ENCODE measurements at regions of chr13 and their contacts with region 1.

Region 1: GRCh38 chr13:99374994-99375737 is 68.0 kb upstream of the GPR183 start:
- DNase-seq: peak; percentile 78
- ATAC-seq: peak; percentile 80
- H3K4me3 Mint-ChIP-seq: peak overlapping the region; percentile 72
- H3K27ac Mint-ChIP-seq: peak overlapping the region; percentile 98
- H3K4me1 Mint-ChIP-seq: peaks cover 92% of the 10 kb centered on the region
- H3K27me3 Mint-ChIP-seq: no peaks in the 10 kb centered on the region
- CTCF ChIP-seq: no peak

Region 2: DNA sequence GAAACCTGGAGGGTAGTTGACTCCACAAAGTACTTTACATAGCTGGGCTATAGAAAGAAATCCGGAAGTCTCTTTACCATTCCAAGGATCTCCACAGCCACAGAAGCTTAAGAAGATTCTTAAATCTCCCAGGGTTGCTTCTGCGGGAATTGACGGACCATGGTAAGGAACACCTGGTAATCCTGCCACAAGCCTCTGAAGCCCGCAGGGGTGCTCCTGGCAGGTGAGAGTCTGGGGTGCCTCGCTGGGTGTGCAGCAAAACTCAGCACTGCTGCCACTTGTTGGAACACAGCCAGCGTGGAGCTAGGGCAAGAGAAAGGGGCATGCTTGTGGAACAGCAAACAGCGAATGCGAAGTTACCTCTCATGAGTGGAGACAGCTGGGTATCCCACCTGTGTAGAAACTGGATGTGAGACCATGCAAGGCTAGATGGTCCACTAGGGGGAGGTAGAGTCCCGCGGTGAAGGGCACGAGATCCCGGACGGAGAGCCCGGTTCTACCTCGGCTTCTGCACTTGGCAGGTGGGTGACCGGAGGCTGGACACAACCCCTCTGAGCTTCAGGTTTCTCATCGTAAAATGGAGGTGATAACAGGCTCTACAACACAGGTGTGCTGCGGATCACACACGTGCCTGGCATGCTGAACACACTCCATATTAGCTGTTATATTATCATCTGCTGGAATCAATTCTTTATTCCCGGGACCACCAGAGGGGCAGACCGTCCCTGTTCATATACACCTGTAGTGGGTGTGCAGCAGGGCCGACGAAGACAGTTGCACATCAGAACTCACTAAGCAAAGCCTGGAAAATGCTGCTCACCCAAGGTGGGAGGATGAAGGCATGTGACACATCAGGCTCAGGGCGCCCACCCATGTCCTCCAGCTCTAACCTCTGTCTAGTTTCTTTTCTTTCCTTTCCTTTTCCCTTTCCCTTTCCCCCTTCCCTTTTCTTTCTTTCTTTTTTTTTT is 198.6 kb before region 1 on chr13:
- CTCF ChIA-PET with region 1: interaction called, 3 read pairs
- POLR2A ChIA-PET with region 1: interaction called, 14 read pairs
- intact Hi-C with region 1: no loop called
- DNase-seq: peak; percentile 64
- ATAC-seq: peak; percentile 90
- H3K4me3 Mint-ChIP-seq: peak overlapping the region; percentile 58
- H3K27ac Mint-ChIP-seq: peak overlapping the region; percentile 24
- H3K4me1 Mint-ChIP-seq: peaks cover 43% of the 10 kb centered on the region
- H3K27me3 Mint-ChIP-seq: peaks cover 2% of the 10 kb centered on the region
- CTCF ChIP-seq: no peak

Region 3: GRCh38 chr13:99281811-99282263 is 93.3 kb before region 1 on chr13:
- CTCF ChIA-PET with region 1: interaction called, 9 read pairs
- POLR2A ChIA-PET with region 1: interaction called, 45 read pairs
- intact Hi-C with region 1: loop called (anchors 1 kb)
- DNase-seq: peak; percentile 46
- ATAC-seq: peak; percentile 81
- H3K4me3 Mint-ChIP-seq: peak overlapping the region; percentile 75
- H3K27ac Mint-ChIP-seq: peak overlapping the region; percentile 95
- H3K4me1 Mint-ChIP-seq: peaks cover 95% of the 10 kb centered on the region
- H3K27me3 Mint-ChIP-seq: no peaks in the 10 kb centered on the region
- CTCF ChIP-seq: no peak

Region 4: GRCh38 chr13:99301913-99302636 is 73.1 kb before region 1 on chr13:
- CTCF ChIA-PET with region 1: interaction called, 4 read pairs
- POLR2A ChIA-PET with region 1: interaction called, 75 read pairs
- intact Hi-C with region 1: loop called (anchors 1 kb)
- DNase-seq: no peak
- ATAC-seq: peak; percentile 56
- H3K4me3 Mint-ChIP-seq: peak overlapping the region; percentile 95
- H3K27ac Mint-ChIP-seq: peak overlapping the region; percentile 93
- H3K4me1 Mint-ChIP-seq: peaks cover 83% of the 10 kb centered on the region
- H3K27me3 Mint-ChIP-seq: no peaks in the 10 kb centered on the region
- CTCF ChIP-seq: no peak

Region 5: DNA sequence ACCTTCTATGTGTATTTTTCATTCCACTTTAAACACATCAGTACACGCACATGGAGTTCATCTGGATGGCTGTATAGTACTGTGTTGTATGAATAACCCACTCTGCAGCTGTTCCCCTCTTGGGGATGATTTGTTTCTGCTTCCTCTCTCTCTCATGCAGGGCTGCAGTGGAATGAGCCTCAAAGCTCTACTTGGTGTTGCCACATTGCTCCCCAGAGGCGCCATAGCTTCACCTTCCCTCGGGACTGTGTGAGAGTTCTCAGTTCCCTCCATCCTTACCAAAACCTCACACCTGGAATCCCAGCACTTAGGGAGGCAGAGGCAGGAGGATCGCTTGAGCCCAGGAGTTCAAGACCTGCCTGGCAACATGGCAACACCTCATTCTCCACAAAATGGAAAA is 39.6 kb before region 1 on chr13:
- CTCF ChIA-PET with region 1: interaction called, 4 read pairs
- POLR2A ChIA-PET with region 1: interaction called, 21 read pairs
- intact Hi-C with region 1: loop called (anchors 2 kb)
- DNase-seq: peak; percentile 40
- ATAC-seq: peak; percentile 94
- H3K4me3 Mint-ChIP-seq: peak overlapping the region; percentile 29
- H3K27ac Mint-ChIP-seq: peak overlapping the region; percentile 77
- H3K4me1 Mint-ChIP-seq: peaks cover 56% of the 10 kb centered on the region
- H3K27me3 Mint-ChIP-seq: no peaks in the 10 kb centered on the region
- CTCF ChIP-seq: no peak

Region 6: DNA sequence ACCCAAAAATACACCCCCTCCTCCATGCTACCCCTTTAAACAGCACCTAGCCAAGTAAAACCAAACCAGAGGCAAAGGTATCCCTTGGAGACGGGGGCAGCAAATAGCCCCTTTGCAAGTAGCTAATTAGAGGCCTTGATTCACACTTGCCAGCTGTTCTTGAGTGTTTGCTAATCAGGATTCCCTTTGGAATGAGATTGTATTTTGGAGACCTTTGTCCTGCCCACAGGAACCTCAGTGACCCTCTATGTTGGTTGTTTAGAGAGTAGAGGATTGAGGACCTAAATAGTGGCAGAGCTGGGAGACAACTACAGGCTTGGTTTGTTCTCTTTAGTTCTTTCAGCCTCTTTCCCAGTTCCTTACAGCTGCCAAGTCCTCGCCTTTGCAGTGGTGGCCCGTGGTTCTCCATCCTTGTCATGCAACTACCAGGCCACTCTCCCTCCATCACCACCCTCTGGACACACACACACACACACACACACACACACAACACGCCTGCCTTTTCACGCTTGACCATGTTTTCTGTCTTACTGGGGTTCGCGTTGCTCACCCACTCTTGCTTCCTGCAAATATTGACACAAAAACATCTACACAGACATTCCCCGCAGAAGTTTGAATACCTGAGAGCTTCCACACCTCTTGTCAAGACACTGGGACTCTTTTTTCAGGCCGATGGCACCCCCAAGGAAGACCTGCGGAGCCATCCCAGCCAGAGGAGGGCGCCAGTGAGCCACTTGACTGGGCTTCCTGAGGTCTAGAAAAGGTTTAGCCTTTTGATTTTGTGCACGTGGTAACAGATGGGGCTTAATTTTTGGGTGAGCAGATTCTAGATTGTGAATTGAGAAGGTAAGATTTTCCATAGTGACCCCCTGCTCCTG is 12.0 kb after region 1 on chr13:
- CTCF ChIA-PET with region 1: interaction called, 25 read pairs
- POLR2A ChIA-PET with region 1: interaction called, 8 read pairs
- intact Hi-C with region 1: loop called (anchors 1 kb)
- DNase-seq: peak; percentile 81
- ATAC-seq: peak; percentile 78
- H3K4me3 Mint-ChIP-seq: peak overlapping the region; percentile 12
- H3K27ac Mint-ChIP-seq: peak overlapping the region; percentile 84
- H3K4me1 Mint-ChIP-seq: peaks cover 43% of the 10 kb centered on the region
- H3K27me3 Mint-ChIP-seq: no peaks in the 10 kb centered on the region
- CTCF ChIP-seq: peak; percentile 94

Region 7: DNA sequence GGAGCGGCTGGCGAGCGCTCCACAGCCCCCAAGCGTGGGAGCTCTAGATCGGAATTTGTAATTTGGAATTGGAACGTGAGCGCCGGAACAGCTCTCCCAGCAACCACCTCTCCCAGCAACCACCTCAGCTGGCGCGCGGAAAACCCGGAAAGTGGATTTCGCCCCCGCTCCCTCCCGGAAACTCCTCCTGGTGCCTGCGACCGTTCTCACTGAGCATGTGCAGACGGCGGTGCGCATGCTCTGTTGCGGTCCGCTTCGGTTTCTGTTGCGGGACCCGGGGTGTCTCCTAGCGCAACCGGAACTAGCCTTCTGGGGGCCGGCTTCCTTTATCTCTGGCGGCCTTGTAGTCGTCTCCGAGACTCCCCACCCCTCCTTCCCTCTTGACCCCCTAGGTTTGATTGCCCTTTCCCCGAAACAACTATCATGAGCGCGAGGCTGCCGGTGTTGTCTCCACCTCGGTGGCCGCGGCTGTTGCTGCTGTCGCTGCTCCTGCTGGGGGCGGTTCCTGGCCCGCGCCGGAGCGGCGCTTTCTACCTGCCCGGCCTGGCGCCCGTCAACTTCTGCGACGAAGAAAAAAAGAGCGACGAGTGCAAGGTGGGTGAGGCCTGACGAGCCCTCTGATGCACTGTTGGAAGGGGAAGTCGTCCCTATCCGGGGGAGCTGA is 126.2 kb after region 1 on chr13 and contains the start of gene TM9SF2:
- CTCF ChIA-PET with region 1: no interaction called
- POLR2A ChIA-PET with region 1: interaction called, 3 read pairs
- intact Hi-C with region 1: loop called (anchors 1 kb)
- DNase-seq: peak; percentile 98
- ATAC-seq: peak; percentile 61
- H3K4me3 Mint-ChIP-seq: peak within 1 kb of the TSS; percentile 97
- H3K27ac Mint-ChIP-seq: peak within 1 kb of the TSS; percentile 97
- H3K4me1 Mint-ChIP-seq: peaks cover 84% of the 10 kb centered on the region
- H3K27me3 Mint-ChIP-seq: no peaks in the 10 kb centered on the region
- CTCF ChIP-seq: no peak
- total RNA-seq, gene TM9SF2: 68.1 and 76.0 TPM in 2 replicates

Measured in activated B cell treated with CpG ODN at 0.5 μM for 24 hours (primary cell).